ENCODE measurements at regions of chr5 and their contacts with region 1.

Region 1: GRCh38 chr5:141958113-141958512 is at the start of gene PCDH12:
- DNase-seq: no peak
- ATAC-seq: peak in 1 of 4 donors; percentile 22
- H3K4me3 ChIP-seq: peak within 1 kb of the TSS in 1 of 4 donors; percentile 12
- H3K27ac ChIP-seq: no peak within 1 kb of the TSS
- H3K4me1 ChIP-seq: peaks cover 0 to 3% (median 0%) of the 10 kb centered on the region in 3 donors
- H3K27me3 ChIP-seq: no peaks in the 10 kb centered on the region
- CTCF ChIP-seq: no peak
- total RNA-seq, gene PCDH12: 0.32 to 1.7 (median 0.93) TPM

Region 2: DNA sequence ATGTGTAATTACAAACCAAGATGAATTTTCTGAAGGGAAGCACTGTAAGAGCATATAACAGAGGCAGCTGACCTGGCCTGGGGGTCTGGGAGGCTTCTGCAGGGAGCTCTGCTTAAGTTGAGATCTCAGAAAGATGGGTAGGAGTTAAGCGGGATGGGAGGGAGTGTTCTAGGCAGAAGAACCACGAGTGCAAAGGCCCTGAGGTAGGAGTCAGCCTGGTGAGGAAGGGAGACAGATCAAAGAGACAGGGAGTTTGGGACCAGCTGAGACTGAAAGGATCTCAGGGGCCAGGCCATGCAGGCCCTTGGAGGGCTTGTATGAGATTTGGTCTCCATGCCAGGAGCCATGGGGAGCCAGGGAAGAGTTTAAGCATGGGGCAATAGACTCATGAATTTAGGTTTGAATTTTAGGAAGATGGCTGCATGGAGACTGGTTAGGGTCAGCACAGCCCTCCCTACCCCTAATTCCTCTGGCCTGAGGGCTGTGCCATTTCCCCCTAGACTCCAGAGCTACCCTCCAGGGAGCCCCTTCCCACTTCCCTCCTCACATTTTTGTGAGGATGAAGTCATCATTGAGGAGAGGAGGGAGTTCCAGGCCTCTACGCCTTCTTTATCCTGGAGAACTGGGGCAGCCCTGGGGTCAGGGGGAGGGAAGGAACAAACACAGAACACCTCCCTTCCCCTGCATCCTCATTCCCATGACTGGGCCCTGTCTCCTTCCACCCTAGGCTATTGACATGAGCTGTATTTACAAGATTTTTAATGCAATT is 271.3 kb before region 1 on chr5:
- intact Hi-C with region 1: loop called in 2 of 3 experiments (anchors 5 kb)
- DNase-seq: no peak
- ATAC-seq: no peak
- H3K4me3 ChIP-seq: no peak overlapping the region
- H3K27ac ChIP-seq: no peak overlapping the region
- H3K4me1 ChIP-seq: no peaks in the 10 kb centered on the region
- H3K27me3 ChIP-seq: peaks cover 0 to 3% (median 0%) of the 10 kb centered on the region in 4 donors
- CTCF ChIP-seq: no peak

Region 3: DNA sequence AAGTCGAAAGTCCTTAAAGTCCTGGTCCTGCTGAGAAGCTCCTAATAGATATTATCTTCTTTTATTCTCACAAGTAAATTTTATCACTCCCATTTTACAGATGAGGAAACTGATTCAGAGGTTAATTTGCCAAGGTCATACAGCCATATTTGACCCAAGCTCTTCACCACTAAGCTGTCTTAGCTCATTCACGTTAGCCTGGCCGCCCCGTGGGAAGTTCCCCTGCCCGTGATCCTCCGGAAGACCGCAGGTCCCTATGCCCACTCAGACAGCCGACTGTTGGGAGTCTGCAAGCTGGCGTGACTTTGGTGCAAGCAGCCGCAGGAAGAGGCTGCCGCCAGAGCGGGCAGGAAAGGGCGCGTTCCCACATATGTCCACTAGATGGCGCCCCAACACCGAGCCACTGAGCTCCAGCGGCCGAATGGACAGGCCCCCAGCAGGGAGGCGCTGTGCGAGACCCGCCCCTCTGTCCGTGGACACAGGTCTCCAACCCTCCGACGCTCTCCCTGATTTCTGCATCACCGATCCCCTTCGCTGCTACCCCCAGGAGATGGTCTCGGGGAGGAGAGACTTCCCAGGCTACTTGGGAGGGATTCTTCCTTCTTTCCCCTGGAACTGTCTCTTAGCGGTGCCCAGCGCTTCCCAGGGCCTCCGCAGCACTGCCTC is 266.1 kb before region 1 on chr5:
- intact Hi-C with region 1: loop called in 2 of 3 experiments (anchors 5 kb)
- DNase-seq: peak; percentile 77 to 98 (median 90)
- ATAC-seq: peak; percentile 95 to 100 (median 98)
- H3K4me3 ChIP-seq: peak overlapping the region in 2 of 4 donors; percentile 26 to 38
- H3K27ac ChIP-seq: no peak overlapping the region
- H3K4me1 ChIP-seq: peaks cover 0 to 3% (median 3%) of the 10 kb centered on the region in 3 donors
- H3K27me3 ChIP-seq: peaks cover 0 to 3% (median 0%) of the 10 kb centered on the region in 4 donors
- CTCF ChIP-seq: peak; percentile 98 to 99 (median 98)